ENCODE measurements at regions of chr11 and their contacts with region 1.

Region 1: DNA sequence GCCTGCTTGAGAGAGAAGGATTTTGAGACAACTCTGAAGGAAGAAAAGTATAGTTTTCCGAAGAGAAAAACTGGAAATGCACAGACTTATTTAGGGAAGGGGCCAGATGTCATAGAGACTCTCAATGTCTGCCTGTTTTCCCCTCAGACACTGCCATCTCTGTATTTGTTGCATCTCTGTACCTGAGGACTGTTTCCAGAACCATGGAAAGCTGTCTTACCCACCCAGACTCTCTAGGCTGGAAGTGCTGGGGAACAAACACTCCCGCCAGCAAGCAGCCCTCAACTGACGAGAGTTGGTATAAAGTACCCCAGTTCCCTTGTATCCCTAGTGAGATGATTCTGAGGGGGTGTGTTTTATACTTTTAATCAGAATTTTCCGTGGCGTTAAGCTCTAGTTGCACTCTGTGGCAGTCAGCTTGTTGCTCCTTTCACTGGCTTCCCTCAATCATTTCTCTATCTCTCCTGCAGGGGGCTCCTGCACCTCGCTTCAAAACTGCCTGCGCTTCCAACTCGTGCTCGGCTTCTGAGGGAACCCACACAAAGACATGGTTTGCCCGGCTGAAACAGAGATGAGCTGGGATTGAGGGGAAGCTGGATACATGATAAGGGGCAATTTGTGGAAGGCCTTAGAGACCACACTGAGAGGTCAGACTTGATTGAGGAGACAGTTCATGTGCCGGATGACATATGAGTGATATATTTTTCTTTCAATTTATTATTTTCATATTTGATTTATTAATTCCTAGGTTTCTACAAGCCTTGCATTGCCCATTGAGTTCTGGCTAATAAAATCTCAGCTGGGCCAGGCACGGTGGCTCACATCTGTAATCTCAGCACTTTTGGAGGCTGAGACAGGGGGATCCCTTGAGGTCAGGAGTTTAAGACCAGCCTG is 36.9 kb upstream of the CLPB start:
- DNase-seq: peak; percentile 59
- ATAC-seq: peak; percentile 91

Region 2: GRCh38 chr11:72430741-72431570 is 40.3 kb before region 1 on chr11:
- intact Hi-C with region 1: no loop called
- DNase-seq: no peak
- ATAC-seq: peak; percentile 32

Region 3: DNA sequence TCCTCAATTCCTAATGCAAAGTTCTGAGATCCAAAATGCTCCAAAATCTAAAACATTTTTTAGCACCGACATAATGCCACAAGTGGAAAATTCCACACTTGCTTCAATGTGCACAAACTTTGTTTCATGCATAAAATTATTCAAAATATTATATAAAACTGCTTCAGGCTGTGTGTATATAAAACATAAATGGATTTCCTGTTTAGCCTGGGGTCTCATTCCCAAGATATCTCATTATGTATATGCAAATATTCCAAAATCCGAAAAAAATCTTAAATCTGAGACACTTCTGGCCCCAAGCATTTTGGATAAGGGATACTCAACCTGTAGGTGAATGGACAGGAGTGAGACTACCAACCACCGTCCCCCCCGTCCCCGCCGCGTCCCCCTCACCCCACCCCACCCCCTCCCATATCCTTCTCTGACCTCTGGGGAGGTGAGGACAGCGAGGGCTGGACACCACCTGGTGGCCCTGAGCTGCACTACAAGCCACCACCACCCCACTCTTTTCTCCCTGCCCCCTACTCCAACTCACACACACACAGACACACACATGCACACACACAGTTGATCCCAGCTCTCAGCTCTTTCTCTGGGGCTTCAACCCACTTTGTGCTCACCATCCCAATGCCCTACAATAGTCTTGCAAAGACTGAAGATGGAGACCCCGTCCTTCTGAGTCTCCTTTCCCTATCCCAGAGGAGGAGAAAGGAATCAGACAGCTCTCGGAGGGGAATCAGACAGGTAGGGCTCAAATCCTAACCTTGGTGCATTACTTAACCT is 102.0 kb after region 1 on chr11:
- intact Hi-C with region 1: loop called (anchors 5 kb)
- DNase-seq: no peak
- ATAC-seq: peak; percentile 77

Region 4: DNA sequence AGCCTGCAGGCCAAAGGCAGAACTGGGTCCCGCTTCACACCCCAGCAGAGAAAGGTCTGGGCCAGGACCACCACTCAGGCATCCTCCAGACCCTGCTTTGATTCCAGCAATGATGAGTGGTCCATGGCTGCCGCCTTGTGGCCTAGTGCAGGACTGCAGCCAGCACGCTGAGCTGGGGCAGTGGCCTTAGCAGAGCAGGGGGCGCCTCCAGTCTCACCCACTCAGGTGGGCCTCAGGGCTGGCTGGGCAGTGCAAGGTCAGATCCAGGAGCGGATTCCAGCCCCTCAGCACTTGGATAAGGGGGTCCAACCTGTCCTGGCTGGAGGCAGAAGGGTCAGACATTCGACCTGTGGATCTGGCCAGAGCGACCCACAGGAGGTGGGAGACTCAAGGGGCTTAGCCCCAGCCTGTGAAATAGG is 212.5 kb after region 1 on chr11:
- intact Hi-C with region 1: loop called (anchors 10 kb)
- DNase-seq: peak; percentile 81
- ATAC-seq: peak; percentile 58

Measured in Right ventricle myocardium superior (tissue), 1 donor.